ENCODE measurements at regions of chr5 and their contacts with region 1.

Region 1: GRCh38 chr5:10452768-10453331 is 11.2 kb downstream of the ROPN1L start:
- DNase-seq: peak; percentile 78
- H3K4me3 ChIP-seq: peak overlapping the region in 1 of 2 experiments; percentile 16; a peak in 1 of 4 replicates
- H3K27ac ChIP-seq: peak overlapping the region in 1 of 2 experiments; percentile 34; a peak in 2 of 4 replicates
- H3K4me1 ChIP-seq: peaks cover 15% of the 10 kb centered on the region in 2 experiments; a peak in 3 of 4 replicates
- H3K27me3 ChIP-seq: no peaks in the 10 kb centered on the region
- CTCF ChIP-seq: peak; percentile 93
- EP300 ChIP-seq: no peak
- RAD21 ChIP-seq: peak; percentile 99

Region 2: DNA sequence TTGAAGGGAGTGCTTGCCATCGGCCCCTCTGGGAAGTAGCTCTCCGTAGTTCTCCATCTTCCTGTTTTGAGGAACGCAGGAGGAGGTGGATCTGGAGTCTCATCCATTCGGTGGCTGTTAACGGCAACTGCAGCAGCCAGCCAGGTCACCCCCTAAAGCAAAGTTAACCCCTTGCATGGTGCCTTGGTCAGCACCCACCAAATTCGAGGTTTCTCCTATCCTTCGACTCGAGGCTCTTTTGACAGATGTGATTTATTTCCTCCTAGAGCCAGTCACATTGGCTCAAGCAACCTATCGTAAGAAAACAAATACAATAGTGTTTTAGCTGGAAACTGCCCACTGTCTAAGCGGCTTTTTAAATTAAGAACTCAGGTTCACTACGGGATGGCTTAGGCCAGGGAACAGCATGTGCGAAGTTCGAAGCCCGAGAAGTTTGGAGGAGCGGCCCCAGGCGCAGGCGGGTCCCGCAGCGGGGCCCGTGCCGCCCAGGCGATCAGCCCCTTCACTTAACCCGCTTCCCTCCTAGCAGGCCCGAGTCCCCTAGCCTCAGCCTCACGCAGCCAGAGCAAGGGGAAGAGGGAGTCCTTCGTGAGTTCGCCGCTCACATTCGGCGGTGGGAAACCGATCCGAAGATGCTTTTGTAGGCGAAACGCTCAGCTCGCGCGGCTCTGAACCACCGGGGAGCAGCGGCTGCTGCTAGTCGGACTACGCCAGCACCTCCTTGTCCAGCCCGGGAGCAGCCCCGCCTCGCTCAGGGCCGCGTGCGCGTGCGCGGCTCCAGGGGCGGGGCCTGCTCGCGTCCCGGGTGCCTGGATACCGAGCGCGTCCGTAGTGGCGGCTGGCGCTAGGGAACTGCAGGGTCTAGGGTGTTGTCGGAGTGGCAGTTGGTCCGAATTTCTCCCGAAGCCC is 11.5 kb before region 1 on chr5 and contains the start of gene ROPN1L:
- CTCF ChIA-PET with region 1: interaction called, 45 read pairs
- POLR2A ChIA-PET with region 1: no interaction called
- DNase-seq: peak; percentile 99
- H3K4me3 ChIP-seq: peak within 1 kb of the TSS; percentile 63 to 72
- H3K27ac ChIP-seq: peak within 1 kb of the TSS; percentile 70 to 84
- H3K4me1 ChIP-seq: peaks cover 0 to 8% of the 10 kb centered on the region in 2 experiments; a peak in 1 of 4 replicates
- H3K27me3 ChIP-seq: no peaks in the 10 kb centered on the region
- CTCF ChIP-seq: no peak
- EP300 ChIP-seq: no peak
- RAD21 ChIP-seq: no peak
- polyA plus RNA-seq, gene ROPN1L: 0.31 and 0.58 TPM in 2 replicates

Region 3: DNA sequence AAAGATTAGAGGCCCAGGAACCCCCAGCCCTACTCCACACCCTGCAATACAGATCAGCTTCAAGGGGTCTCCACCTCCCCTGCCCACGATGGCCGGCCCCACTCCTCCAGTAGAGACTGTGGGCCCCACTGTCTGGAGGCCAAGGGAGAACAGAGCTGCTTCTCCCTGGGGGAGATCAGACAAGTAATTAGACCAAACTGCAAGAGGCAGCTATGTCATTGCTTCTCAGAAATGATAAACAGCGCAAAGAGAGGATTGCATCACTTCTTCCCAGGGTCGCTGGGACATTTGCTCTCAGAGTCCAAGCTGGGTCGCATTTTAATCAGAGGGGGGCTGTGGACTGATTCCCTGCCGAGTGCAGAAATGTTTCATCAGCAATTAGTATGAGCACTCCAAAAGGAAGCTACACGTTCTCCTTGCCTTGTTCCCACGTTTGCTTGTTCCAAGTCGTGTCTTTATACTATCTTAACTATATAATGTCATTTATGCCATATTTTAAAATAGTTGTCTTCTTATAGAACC is 48.8 kb after region 1 on chr5:
- CTCF ChIA-PET with region 1: interaction called, 11 read pairs
- POLR2A ChIA-PET with region 1: no interaction called
- DNase-seq: no peak
- H3K4me3 ChIP-seq: no peak overlapping the region
- H3K27ac ChIP-seq: no peak overlapping the region
- H3K4me1 ChIP-seq: peaks cover 0 to 15% of the 10 kb centered on the region in 2 experiments; a peak in 2 of 4 replicates
- H3K27me3 ChIP-seq: no peaks in the 10 kb centered on the region
- CTCF ChIP-seq: no peak
- EP300 ChIP-seq: no peak
- RAD21 ChIP-seq: no peak

Region 4: GRCh38 chr5:10617103-10617502 is 164.3 kb after region 1 on chr5:
- CTCF ChIA-PET with region 1: interaction called, 265 read pairs
- POLR2A ChIA-PET with region 1: no interaction called
- DNase-seq: no peak
- H3K4me3 ChIP-seq: no peak overlapping the region
- H3K27ac ChIP-seq: no peak overlapping the region
- H3K4me1 ChIP-seq: no peaks in the 10 kb centered on the region
- H3K27me3 ChIP-seq: no peaks in the 10 kb centered on the region
- CTCF ChIP-seq: no peak
- EP300 ChIP-seq: no peak
- RAD21 ChIP-seq: no peak

Region 5: GRCh38 chr5:10635257-10635866 is 182.5 kb after region 1 on chr5:
- CTCF ChIA-PET with region 1: interaction called, 265 read pairs
- POLR2A ChIA-PET with region 1: no interaction called
- DNase-seq: no peak
- H3K4me3 ChIP-seq: no peak overlapping the region
- H3K27ac ChIP-seq: peak overlapping the region in 1 of 2 experiments; percentile 32; a peak in 1 of 4 replicates
- H3K4me1 ChIP-seq: peaks cover 0 to 12% of the 10 kb centered on the region in 2 experiments; a peak in 1 of 4 replicates
- H3K27me3 ChIP-seq: no peaks in the 10 kb centered on the region
- CTCF ChIP-seq: no peak
- EP300 ChIP-seq: no peak
- RAD21 ChIP-seq: no peak

Measured in SK-N-SH (cell line).